ENCODE measurements at regions of chr5 and their contacts with region 1.

Region 1: GRCh38 chr5:37722236-37723146 is 117.3 kb downstream of the GDNF start:
- DNase-seq: peak; percentile 88
- H3K4me3 ChIP-seq: no peak overlapping the region
- CTCF ChIP-seq: no peak

Region 2: DNA sequence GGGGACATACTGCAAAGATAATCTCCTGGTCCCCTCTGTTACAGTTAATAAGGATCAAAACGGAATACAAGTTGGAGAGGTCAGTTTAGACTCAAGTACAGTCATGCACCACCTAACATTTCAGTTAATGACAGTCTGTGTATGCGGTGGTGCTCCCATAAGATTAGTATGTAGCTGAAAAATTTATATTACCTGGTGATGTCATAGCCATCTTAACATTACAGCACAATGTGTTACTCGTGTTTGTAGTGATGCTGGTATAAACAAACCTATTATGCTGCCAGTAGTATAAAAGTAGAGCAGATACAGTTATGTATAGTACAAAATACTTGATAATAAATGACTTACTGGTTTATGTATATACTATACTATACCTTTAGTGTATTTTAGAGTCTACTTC is 90.6 kb before region 1 on chr5:
- CTCF ChIA-PET with region 1: no interaction called
- POLR2A ChIA-PET with region 1: no interaction called
- DNase-seq: no peak
- H3K4me3 ChIP-seq: no peak overlapping the region
- CTCF ChIP-seq: no peak

Region 3: DNA sequence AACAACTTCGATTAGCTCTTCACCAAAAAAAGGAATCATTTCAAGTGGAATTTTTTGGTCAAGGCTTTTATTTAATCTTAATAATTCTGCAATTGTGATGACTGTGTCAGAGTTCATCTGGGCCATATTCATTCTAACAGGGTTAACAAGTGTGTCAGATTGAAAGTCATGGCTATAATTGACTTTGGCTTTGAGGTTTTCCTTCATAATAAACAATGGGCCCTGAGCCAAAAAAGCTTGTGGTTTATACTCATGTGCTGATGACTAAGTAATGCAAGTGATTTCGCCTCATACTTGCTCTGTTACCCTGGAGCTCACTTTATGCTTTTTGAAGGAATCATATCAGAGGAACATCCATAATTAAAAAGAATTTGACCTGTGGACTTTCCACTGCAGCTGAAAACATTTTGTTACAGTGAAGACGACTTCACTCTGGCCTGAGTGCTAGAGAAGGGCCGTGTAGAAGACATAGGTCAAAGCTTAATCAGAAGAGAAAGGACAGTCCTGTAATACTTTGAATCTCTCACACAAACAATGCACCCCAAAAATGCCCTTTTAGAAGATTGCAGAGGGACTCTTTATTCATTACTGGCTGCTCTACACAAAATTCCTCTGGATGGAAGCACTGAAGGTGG is 15.7 kb after region 1 on chr5:
- CTCF ChIA-PET with region 1: interaction called, 107 read pairs
- POLR2A ChIA-PET with region 1: interaction called, 17 read pairs
- DNase-seq: peak; percentile 85
- H3K4me3 ChIP-seq: no peak overlapping the region
- CTCF ChIP-seq: no peak

Region 4: GRCh38 chr5:37774912-37775483 is 52.5 kb after region 1 on chr5:
- CTCF ChIA-PET with region 1: interaction called, 11 read pairs
- POLR2A ChIA-PET with region 1: interaction called, 10 read pairs
- DNase-seq: no peak
- H3K4me3 ChIP-seq: no peak overlapping the region
- CTCF ChIP-seq: peak; percentile 50

Region 5: GRCh38 chr5:37810311-37810710 is 87.8 kb after region 1 on chr5:
- CTCF ChIA-PET with region 1: interaction called, 8 read pairs
- POLR2A ChIA-PET with region 1: interaction called, 11 read pairs
- DNase-seq: no peak
- H3K4me3 ChIP-seq: peak overlapping the region; percentile 50
- CTCF ChIP-seq: no peak

Region 6: GRCh38 chr5:37837414-37838032 is 115.0 kb after region 1 on chr5:
- CTCF ChIA-PET with region 1: interaction called, 14 read pairs
- POLR2A ChIA-PET with region 1: interaction called, 14 read pairs
- DNase-seq: no peak
- H3K4me3 ChIP-seq: peak overlapping the region; percentile 68
- CTCF ChIP-seq: peak; percentile 88

Measured in AG04449 (cell line).